ENCODE measurements at regions of chr3 and their contacts with region 1.

Region 1: DNA sequence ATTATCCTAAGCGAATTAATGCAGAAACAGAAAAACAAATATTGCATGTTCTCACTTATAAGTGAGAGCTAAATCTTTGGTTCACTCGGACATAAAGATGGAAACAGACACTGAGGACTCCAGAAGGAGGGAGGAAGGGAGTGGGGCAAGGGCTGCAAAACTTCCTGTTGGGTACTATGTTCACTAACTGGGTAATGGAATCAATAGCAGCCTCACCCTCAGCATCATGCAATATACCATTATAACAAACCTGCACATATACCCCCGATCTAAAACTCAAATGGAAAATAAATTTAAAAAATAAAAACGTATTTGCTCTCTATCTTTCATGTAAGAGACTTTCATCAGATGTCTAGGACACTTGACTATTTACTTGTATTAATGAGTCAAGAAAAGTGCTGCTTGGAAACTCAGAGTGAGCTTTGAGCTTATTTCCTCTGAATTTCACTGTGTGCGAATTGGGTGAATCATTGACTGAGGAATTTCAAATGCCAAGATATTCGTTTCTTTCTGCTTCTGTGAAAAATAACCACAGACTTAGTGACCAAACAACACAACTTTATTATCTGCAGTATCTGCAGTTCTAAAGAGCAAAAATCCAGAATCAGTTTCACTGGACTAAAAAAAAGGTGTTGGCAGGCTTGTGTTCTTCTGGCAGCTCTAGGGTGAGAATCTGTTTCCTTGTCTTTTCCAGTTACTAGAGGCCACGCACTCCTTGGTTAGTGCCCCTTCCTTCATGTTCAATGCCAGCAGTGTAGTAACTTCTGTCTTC is 18.4 kb downstream of the TM4SF18 start:
- DNase-seq: peak in 1 of 2 experiments; percentile 62
- ATAC-seq: peak; percentile 81 to 83
- H3K4me3 ChIP-seq: no peak overlapping the region
- H3K27ac ChIP-seq: peak overlapping the region; percentile 85 to 90
- H3K4me1 ChIP-seq: peaks cover 46% of the 10 kb centered on the region
- CTCF ChIP-seq: no peak
- EP300 ChIP-seq: no peak
- POLR2A ChIP-seq: no peak
- RAD21 ChIP-seq: 0 out of 5 replicates have a peak, but pooled peaks of 1 of the 2 experiments have one; percentile 19

Region 2: GRCh38 chr3:149020196-149020838 is 294.7 kb before region 1 on chr3:
- CTCF ChIA-PET with region 1: no interaction called
- POLR2A ChIA-PET with region 1: no interaction called
- DNase-seq: no peak
- ATAC-seq: no peak
- H3K4me3 ChIP-seq: no peak overlapping the region
- H3K27ac ChIP-seq: no peak overlapping the region
- H3K4me1 ChIP-seq: no peaks in the 10 kb centered on the region
- CTCF ChIP-seq: no peak
- EP300 ChIP-seq: no peak
- POLR2A ChIP-seq: no peak
- RAD21 ChIP-seq: no peak

Region 3: DNA sequence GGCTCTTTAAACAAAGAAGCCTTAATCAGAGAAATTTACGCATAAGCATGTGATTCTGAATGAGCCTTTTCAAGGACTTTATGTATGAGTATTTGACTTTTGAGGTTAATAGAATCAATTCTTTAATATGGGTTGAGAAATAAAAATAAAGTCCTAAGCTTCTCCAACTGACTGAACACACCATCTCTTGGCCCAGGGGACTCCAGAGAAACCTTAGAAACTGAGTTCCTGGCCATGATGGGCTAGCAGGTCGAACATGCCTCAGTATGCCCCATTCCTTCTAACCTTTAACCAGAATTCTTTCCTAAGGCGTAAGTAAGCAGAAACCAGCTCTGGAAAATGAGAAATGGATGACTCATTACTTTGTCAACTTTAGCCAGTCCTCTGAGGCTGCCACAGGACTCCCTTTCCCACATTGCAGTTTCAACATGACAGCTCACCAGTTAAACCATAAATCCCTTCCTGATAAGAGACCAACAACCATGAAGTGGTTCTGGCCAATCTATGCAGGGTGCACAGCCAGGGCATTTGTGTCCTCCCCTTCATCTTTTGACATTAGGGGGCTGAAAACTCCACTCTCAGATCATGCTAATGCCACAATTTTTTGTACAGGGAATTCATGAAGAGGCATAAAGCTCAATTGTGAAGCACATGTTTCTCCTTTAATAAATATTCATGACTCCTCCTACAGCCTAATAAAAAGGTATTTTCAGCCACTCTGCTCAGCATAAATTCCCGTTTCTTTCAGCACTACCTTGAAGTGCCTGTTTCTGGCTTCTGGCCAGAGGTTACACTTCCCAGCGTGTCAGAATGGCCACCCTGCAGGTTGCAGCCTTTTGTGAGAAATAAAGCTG is 14.8 kb before region 1 on chr3:
- CTCF ChIA-PET with region 1: interaction called, 5 read pairs
- POLR2A ChIA-PET with region 1: interaction called, 12 read pairs
- DNase-seq: peak; percentile 65 to 98
- ATAC-seq: peak; percentile 91
- H3K4me3 ChIP-seq: no peak overlapping the region
- H3K27ac ChIP-seq: peak overlapping the region; percentile 91 to 95
- H3K4me1 ChIP-seq: peaks cover 49% of the 10 kb centered on the region
- CTCF ChIP-seq: no peak
- EP300 ChIP-seq: peak; percentile 55 to 88; a peak in 3 of 5 replicates
- POLR2A ChIP-seq: no peak
- RAD21 ChIP-seq: peak in 1 of 2 experiments; percentile 46; a peak in 4 of 5 replicates

Region 4: GRCh38 chr3:149424918-149425317 is 109.9 kb after region 1 on chr3:
- CTCF ChIA-PET with region 1: no interaction called
- POLR2A ChIA-PET with region 1: no interaction called
- DNase-seq: no peak
- ATAC-seq: no peak
- H3K4me3 ChIP-seq: no peak overlapping the region
- H3K27ac ChIP-seq: no peak overlapping the region
- H3K4me1 ChIP-seq: no peaks in the 10 kb centered on the region
- CTCF ChIP-seq: no peak
- EP300 ChIP-seq: no peak
- POLR2A ChIP-seq: no peak
- RAD21 ChIP-seq: no peak

Measured in A549 (cell line).